ENCODE measurements at regions of chr17 and their contacts with region 1.

Region 1: DNA sequence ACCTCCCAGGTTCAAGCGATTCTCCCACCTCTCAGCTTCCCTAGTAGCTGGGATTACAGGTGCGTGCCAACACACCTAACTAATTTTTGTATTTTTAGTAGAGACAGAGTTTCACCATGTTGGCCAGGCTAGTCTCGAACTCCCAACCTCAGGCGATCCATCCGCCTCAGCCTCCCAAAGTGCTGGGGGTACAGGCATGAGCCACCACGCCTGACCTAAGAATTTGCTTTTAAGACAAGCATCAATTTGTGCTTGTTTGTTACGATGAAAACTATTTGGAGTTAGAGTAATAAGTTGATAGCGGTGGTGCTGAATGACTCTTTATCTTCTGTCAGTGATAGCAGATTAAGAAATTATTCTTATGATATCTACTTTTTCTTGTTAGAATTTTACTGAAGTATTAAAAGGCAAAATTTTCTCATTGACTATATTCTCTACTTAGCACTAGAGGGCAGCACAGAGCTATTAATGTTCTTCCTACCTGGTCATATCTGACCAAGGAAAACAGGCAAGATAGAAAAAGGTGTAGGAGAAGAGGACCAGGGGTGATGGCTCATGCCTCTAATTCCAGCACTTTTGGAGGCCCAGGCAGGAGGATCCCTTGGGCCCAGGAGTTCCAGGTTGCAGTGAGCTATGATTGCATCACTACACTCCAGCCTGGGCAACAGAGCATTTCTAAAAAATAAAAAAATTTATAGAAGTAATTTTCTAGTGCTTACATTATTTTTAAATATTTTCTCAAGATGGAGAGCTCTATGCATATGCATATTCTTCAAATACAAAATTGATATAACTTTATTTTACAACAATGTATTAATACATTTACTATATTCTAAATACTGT is 24.5 kb downstream of the STXBP4 start:
- DNase-seq: no peak
- ATAC-seq: no peak
- H3K4me3 Mint-ChIP-seq: no peak overlapping the region
- H3K27ac Mint-ChIP-seq: no peak overlapping the region
- H3K4me1 Mint-ChIP-seq: no peaks in the 10 kb centered on the region
- H3K27me3 Mint-ChIP-seq: no peaks in the 10 kb centered on the region

Region 2: DNA sequence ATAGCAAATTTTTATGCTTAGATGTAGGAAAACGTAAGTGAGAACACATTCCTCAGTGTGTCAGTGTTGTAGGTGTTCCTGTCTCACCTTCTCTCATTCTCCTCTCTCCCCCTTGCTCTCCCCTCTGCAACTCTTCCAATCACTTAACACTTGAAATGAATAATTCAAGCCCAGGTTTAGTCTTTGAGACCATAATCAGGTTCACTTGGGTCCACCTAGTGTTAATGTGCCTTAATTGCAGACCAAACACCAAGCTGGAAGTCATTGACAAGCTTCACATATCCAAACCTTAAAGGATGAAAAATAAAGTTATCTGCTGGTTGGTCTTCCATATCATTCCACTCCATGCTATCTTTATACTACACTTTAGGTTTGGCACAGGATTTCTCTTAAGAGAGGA is 12.5 kb after region 1 on chr17:
- CTCF ChIA-PET with region 1: interaction called, 16 read pairs
- POLR2A ChIA-PET with region 1: no interaction called
- DNase-seq: peak; percentile 29
- ATAC-seq: peak; percentile 55
- H3K4me3 Mint-ChIP-seq: no peak overlapping the region
- H3K27ac Mint-ChIP-seq: no peak overlapping the region
- H3K4me1 Mint-ChIP-seq: peaks cover 2% of the 10 kb centered on the region
- H3K27me3 Mint-ChIP-seq: no peaks in the 10 kb centered on the region

Region 3: GRCh38 chr17:55295411-55296170 is 302.6 kb after region 1 on chr17:
- CTCF ChIA-PET with region 1: interaction called, 13 read pairs
- POLR2A ChIA-PET with region 1: no interaction called
- DNase-seq: peak; percentile 67
- ATAC-seq: peak; percentile 90
- H3K4me3 Mint-ChIP-seq: no peak overlapping the region
- H3K27ac Mint-ChIP-seq: no peak overlapping the region
- H3K4me1 Mint-ChIP-seq: no peaks in the 10 kb centered on the region
- H3K27me3 Mint-ChIP-seq: peaks cover 23% of the 10 kb centered on the region

Region 4: DNA sequence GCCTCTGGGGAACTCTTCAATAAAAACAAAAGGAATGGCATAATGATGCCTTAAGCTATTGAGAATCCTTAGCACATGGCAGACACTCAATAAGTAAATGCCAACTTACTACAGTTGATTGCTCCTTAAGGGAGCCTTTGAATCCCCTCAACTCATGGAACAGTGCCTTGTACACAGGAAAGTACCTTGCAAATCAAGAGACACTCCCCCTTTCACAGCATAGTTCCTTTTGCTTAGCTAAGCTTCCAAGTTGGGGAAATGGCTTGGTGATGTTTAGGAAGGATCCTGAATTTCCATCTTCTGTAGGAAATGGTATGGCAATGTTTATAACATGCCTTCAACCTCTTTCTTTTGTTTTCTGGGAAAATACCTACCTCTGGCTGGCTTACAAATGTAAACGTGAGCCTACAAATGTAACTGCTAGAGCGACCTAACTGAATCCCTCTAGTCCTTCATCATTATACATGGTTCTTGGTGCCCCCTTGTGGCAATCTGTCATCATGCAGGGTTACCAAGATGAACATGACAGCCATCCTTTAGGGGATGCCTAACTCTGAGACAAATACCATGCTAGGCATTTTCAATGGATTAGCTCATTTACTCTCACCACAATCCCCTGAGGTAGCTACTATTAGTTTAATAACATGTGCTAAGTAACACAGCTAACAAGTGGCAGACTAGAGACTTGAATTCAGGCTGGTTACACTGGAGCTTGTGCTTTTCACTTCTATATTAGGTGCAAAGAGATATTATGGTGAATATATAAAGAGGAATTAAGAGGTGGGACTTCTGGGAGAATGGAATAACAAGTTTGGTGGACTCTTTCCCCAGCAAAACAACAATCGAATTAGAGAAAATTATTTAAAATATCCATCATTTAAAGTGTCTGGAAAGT is 363.7 kb after region 1 on chr17:
- CTCF ChIA-PET with region 1: interaction called, 62 read pairs
- POLR2A ChIA-PET with region 1: no interaction called
- DNase-seq: peak; percentile 87
- ATAC-seq: peak; percentile 88
- H3K4me3 Mint-ChIP-seq: no peak overlapping the region
- H3K27ac Mint-ChIP-seq: no peak overlapping the region
- H3K4me1 Mint-ChIP-seq: peaks cover 11% of the 10 kb centered on the region
- H3K27me3 Mint-ChIP-seq: peaks cover 27% of the 10 kb centered on the region

Measured in activated CD8-positive, alpha-beta T cell treated with anti-CD3 and anti-CD28 coated beads, Interleukin-2, amount 10 ng/mL, durations not matched to agents 7 days and 5 days (primary cell).